Natural killer cell (primary cell): ENCODE measurements at regions of chr15 and their contacts with region 1.

Region 1: DNA sequence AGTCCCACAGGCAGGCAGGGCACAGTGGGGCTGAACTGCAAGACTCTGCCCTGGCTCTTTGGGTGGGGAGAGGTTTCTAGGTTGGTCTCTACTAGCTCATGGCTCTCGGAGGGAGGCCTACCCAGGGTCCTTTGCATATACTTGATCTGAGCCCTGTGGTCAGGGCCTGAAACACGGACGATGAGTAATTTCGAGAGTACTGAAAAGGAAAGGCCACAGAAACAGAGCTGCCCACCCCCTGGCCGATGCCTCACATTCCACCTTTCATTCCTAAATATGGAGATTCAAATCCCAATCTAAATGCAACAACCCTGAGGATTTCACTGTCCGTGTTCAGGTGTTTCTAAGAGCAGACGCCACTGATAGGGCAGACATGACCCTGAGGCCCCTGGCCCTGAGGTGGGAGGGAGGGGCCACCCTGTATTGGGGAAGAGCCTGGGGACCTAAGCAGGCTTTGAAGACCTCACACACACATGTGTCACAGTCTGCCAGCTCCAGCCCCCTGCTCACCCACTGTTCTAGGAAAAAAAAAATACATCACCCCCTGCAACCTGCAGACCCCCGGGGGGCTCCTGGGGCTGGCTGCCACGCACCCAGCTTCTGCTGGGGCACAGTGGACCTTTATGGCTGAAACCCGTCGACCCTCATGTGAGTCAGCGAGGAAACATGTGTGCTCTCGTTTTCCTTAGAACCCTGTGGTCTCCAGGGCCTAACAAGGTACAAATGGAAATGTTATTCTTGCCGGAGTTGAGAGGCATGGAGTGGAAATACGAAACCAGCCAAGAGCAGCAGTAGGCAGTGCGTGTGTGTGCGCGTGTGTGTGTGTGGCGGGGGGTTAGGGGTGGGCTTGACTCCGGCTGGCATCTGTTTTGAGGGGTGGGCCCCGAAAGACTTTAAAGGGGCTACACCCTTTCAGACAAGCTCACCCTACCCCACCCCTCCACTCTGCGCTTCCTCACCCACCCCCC is 112.7 kb downstream of the CHSY1 start:
- DNase-seq: no peak
- ATAC-seq: no peak
- H3K4me3 ChIP-seq: no peak overlapping the region
- H3K4me3 Mint-ChIP-seq: no peak overlapping the region
- H3K27ac ChIP-seq: no peak overlapping the region
- H3K27ac Mint-ChIP-seq: peak overlapping the region in 1 of 2 donors; percentile 67
- H3K4me1 ChIP-seq: peaks cover 38% of the 10 kb centered on the region
- H3K4me1 Mint-ChIP-seq: peaks cover 35 to 36% of the 10 kb centered on the region in 2 donors
- H3K27me3 ChIP-seq: no peaks in the 10 kb centered on the region
- H3K27me3 Mint-ChIP-seq: no peaks in the 10 kb centered on the region
- CTCF ChIP-seq: no peak

Region 2: DNA sequence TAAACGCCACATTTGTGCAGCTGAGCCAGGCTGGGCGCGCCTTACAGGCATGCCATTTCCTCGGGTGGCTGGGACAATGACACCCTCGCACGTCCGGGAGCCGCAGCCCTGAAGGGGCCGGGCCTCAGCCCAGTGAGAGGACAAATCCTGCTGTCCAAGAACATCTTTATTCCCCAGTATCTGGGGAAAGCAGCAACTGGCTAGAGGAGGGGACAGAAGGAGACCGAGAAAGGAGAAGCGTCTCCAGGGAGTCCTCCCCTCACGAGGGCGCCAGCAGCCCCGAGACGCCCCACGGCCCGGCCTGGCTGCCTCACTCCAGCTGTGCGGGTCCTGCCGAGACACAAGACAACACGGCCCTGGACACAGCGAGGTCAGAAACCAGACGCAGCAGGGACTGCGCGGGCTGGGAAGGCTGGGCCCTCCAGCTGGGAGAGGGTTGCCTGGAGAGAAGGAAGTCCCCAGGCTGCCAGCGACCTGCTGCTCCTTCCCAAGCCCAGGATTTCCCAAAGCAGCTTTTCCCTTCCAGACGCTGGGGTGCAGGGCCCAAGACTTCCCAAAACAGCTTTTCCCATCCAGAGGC is 17.6 kb before region 1 on chr15:
- intact Hi-C with region 1: no loop called
- DNase-seq: peak; percentile 13 to 33
- ATAC-seq: peak; percentile 68 to 86 (median 79)
- H3K4me3 ChIP-seq: peak overlapping the region; percentile 25
- H3K4me3 Mint-ChIP-seq: peak overlapping the region; percentile 63
- H3K27ac ChIP-seq: no peak overlapping the region
- H3K27ac Mint-ChIP-seq: peak overlapping the region in 1 of 2 donors; percentile 76
- H3K4me1 ChIP-seq: peaks cover 39% of the 10 kb centered on the region
- H3K4me1 Mint-ChIP-seq: peaks cover 48 to 49% of the 10 kb centered on the region in 2 donors
- H3K27me3 ChIP-seq: no peaks in the 10 kb centered on the region
- H3K27me3 Mint-ChIP-seq: no peaks in the 10 kb centered on the region
- CTCF ChIP-seq: peak; percentile 7

Region 3: GRCh38 chr15:101156509-101157159 is 17.4 kb after region 1 on chr15:
- intact Hi-C with region 1: no loop called
- DNase-seq: no peak
- ATAC-seq: no peak
- H3K4me3 ChIP-seq: no peak overlapping the region
- H3K4me3 Mint-ChIP-seq: no peak overlapping the region
- H3K27ac ChIP-seq: no peak overlapping the region
- H3K27ac Mint-ChIP-seq: no peak overlapping the region
- H3K4me1 ChIP-seq: peaks cover 14% of the 10 kb centered on the region
- H3K4me1 Mint-ChIP-seq: peaks cover 8 to 11% of the 10 kb centered on the region in 2 donors
- H3K27me3 ChIP-seq: no peaks in the 10 kb centered on the region
- H3K27me3 Mint-ChIP-seq: no peaks in the 10 kb centered on the region
- CTCF ChIP-seq: no peak

Region 4: GRCh38 chr15:101242160-101242998 is 103.2 kb after region 1 on chr15:
- intact Hi-C with region 1: loop called (anchors 5 kb)
- DNase-seq: peak; percentile 62 to 90
- ATAC-seq: peak; percentile 92 to 95 (median 94)
- H3K4me3 ChIP-seq: peak overlapping the region; percentile 10
- H3K4me3 Mint-ChIP-seq: peak overlapping the region; percentile 93
- H3K27ac ChIP-seq: peak overlapping the region; percentile 62
- H3K27ac Mint-ChIP-seq: peak overlapping the region; percentile 85 to 95
- H3K4me1 ChIP-seq: peaks cover 56% of the 10 kb centered on the region
- H3K4me1 Mint-ChIP-seq: peaks cover 81 to 85% of the 10 kb centered on the region in 2 donors
- H3K27me3 ChIP-seq: no peaks in the 10 kb centered on the region
- H3K27me3 Mint-ChIP-seq: no peaks in the 10 kb centered on the region
- CTCF ChIP-seq: no peak